ENCODE measurements at regions of chr9 and their contacts with region 1.

Region 1: DNA sequence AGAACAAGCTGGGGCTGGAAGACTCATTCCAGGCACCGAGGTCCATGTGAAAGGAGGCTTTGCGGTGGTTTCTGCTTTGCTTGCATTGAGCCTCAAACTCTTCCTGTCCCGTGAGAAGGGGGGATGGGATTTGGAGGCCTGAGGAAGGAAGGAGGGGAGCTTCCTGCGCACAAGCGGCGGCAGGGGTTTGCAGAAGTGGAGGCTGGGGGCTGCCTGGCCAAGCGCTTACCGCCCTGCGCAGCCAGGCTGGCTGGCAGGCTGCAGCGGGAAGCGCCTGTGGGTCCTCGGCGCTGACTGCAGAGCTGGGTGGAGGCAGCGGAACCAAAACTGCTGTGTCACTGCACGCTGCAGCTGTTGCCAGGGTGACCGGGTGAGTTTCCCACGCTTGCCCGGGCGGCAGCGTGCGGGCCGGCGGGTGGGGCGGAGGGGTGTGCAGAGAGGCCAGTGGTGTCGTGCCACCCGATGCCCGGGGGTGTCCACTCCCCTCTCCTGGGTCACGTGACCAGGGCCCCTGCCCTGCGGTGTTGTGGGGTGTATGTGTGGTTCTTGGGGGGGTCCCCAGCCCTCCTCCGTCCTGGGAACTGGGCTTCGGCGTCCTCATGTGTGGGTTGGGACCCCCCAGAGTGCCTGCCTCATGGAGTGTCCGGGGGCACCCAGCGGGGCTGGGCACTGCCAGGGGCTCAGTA is 81.0 kb downstream of the RXRA start:
- DNase-seq: peak; percentile 58 to 91 (median 68)
- ATAC-seq: peak; percentile 83
- H3K4me3 ChIP-seq: peak overlapping the region; percentile 38
- H3K4me3 Mint-ChIP-seq: peak overlapping the region; percentile 66
- H3K27ac ChIP-seq: no peak overlapping the region
- H3K27ac Mint-ChIP-seq: peak overlapping the region; percentile 14
- H3K4me1 ChIP-seq: peaks cover 79% of the 10 kb centered on the region
- H3K4me1 Mint-ChIP-seq: peaks cover 42% of the 10 kb centered on the region
- H3K27me3 ChIP-seq: no peaks in the 10 kb centered on the region
- H3K27me3 Mint-ChIP-seq: no peaks in the 10 kb centered on the region
- CTCF ChIP-seq: no peak

Region 2: DNA sequence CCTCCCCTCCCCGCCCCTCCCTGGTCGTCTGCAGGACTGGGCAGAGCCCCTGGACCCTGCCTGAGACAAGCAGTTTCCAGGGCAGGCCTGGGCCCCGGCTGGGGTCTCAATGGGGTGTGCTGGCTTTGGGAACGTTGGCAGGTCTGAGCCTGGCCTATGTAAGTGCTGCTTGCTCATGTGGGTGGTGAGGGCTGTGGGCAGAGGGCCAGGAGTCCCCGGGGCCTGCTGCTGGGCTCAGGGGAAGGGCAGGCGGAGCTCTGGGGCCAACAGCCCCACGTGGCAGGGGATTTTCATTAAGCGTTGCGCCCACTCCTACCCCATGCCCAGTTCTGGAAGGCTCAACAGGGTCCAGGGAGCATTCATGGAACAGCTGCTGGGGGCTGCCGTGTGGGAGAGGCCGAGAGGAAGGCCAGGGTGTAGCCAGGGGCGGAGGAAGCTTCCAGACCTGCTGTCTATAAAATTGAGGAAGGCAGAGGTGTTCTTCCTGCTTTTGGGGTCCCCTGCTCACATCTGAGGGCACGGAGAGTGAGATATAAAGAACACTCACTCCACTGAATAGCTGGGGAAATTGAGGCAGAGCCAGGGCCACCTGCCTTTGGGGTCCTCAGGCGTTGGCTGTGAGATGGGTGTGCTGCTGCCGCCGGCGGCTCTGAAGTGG is 48.5 kb before region 1 on chr9:
- CTCF ChIA-PET with region 1: no interaction called
- POLR2A ChIA-PET with region 1: no interaction called
- intact Hi-C with region 1: no loop called
- DNase-seq: no peak
- ATAC-seq: no peak
- H3K4me3 ChIP-seq: no peak overlapping the region
- H3K4me3 Mint-ChIP-seq: no peak overlapping the region
- H3K27ac ChIP-seq: no peak overlapping the region
- H3K27ac Mint-ChIP-seq: no peak overlapping the region
- H3K4me1 ChIP-seq: no peaks in the 10 kb centered on the region
- H3K4me1 Mint-ChIP-seq: no peaks in the 10 kb centered on the region
- H3K27me3 ChIP-seq: no peaks in the 10 kb centered on the region
- H3K27me3 Mint-ChIP-seq: no peaks in the 10 kb centered on the region
- CTCF ChIP-seq: no peak

Region 3: GRCh38 chr9:134391314-134392231 is 15.7 kb before region 1 on chr9:
- CTCF ChIA-PET with region 1: no interaction called
- POLR2A ChIA-PET with region 1: interaction called, 13 read pairs
- intact Hi-C with region 1: no loop called
- DNase-seq: peak; percentile 30 to 94 (median 58)
- ATAC-seq: peak; percentile 70
- H3K4me3 ChIP-seq: peak overlapping the region; percentile 36
- H3K4me3 Mint-ChIP-seq: peak overlapping the region; percentile 88
- H3K27ac ChIP-seq: peak overlapping the region; percentile 88 to 91
- H3K27ac Mint-ChIP-seq: peak overlapping the region; percentile 99
- H3K4me1 ChIP-seq: peaks cover 71% of the 10 kb centered on the region
- H3K4me1 Mint-ChIP-seq: peaks cover 45% of the 10 kb centered on the region
- H3K27me3 ChIP-seq: no peaks in the 10 kb centered on the region
- H3K27me3 Mint-ChIP-seq: no peaks in the 10 kb centered on the region
- CTCF ChIP-seq: no peak

Measured in CD4-positive, alpha-beta T cell (primary cell).